Cardiac septum (tissue), 1 donor: ENCODE measurements at regions of chr6 and their contacts with region 1.

Region 1: GRCh38 chr6:35297601-35298481 is at the start of gene DEF6:
- DNase-seq: peak; percentile 93
- total RNA-seq, gene DEF6: 1.7 TPM

Region 2: DNA sequence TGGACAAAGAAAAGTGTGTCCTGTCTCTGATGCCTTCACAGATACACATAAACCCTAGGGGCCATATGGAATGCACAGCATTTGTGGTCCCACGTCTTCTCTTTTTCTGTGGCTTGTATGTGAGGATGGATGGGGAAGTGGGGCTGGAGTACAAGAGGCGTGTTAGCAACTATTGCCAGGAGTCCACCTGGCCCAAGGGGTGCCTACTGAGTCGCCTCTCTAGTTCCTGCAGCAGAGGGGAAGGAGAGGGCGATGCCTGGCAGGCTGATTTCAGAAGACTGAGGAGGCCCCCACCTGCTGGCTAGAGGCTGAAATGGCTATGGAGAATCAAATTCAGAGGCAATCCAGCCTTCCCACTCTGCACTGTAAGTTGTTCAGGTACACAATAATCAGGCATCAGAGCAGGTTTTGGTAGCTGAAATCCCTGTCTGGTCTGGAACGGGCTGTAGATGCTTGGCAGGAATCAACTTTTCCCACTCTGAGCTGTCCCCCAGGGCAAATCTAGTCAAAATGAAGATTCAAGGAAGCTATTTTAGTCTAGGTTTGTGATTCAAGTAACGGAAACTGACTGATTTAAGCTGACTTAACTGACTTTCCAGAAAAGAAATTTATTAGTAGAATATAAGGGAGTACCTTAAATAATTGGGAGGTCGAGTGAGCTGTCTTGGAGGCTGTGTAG is 29.6 kb after region 1 on chr6:
- intact Hi-C with region 1: loop called (anchors 5 kb)
- DNase-seq: peak; percentile 88

Region 3: GRCh38 chr6:35342258-35343091 is 44.6 kb after region 1 on chr6 and contains the start of gene PPARD:
- intact Hi-C with region 1: no loop called
- DNase-seq: peak; percentile 100
- total RNA-seq, gene PPARD: 19.0 TPM

Region 4: DNA sequence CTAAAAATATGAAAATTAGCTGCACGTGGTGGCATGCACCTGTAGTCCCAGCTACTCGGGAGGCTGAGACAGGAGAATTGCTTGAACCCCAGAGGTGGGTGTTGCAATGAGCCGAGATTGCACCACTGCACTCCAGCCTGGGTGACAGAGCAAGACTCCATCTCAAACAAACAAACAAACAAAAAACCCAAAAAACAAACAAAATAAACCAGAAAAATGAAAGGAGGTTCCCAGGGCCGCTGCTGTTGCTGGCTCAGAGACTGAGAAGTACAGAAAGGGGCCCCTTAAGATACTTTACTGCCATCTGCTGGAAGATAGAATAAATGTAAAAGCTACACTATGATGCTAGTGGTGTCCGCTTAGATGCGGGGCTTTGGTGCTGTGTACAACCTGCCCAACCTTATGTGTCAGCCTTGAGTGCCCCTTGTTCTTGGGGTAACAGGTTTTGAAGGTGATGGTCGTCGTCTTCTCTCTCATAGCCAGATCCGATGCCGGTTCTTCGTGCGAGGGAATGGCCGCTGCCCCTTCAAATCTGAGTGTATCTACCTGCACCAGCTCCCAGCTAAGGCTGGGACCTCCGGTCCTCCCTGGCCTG is 151.5 kb after region 1 on chr6:
- intact Hi-C with region 1: loop called (anchors 1 kb)
- DNase-seq: no peak